Naive thymus-derived CD4-positive, alpha-beta T cell (primary cell): ENCODE measurements at regions of chr9 and their contacts with region 1.

Region 1: DNA sequence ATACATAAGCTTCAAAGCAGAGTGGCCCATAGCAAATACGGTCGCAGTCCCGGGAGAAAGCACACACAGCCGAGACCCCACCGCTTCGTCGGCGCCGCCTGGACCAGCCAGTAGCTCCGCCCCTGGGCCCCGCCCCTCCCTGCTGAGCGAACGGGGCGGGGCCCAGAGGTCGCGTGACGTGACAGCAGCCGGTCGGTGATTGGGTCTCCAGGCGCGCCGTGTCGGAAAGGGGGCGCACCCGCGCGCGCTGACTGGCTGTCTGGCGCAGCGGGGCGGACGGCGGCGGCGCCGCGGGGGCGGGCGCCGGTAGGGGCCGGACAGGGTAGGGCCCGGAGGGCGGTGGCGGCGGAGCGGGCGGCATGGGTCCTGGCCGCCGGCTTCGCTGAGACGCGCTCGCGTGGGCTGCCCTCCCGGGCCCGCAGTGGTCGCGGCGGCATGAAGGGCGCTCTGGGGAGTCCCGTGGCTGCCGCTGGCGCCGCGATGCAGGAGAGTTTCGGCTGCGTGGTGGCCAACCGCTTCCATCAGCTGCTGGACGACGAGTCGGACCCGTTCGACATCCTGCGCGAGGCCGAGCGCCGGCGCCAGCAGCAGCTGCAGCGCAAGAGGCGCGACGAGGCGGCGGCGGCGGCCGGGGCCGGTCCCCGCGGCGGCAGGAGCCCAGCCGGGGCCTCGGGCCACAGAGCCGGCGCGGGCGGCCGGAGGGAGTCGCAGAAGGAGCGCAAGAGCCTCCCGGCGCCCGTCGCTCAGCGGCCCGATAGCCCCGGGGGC is at the start of gene HABP4:
- DNase-seq: peak; percentile 90 to 97 (median 95)
- ATAC-seq: peak; percentile 98
- H3K4me3 ChIP-seq: peak within 1 kb of the TSS; percentile 77
- H3K4me3 Mint-ChIP-seq: peak within 1 kb of the TSS; percentile 88 to 99 (median 93)
- H3K27ac ChIP-seq: peak within 1 kb of the TSS; percentile 74
- H3K27ac Mint-ChIP-seq: peak within 1 kb of the TSS; percentile 74 to 98 (median 94)
- H3K4me1 ChIP-seq: peaks cover 5 to 14% of the 10 kb centered on the region in 2 donors
- H3K4me1 Mint-ChIP-seq: peaks cover 19 to 33% (median 26%) of the 10 kb centered on the region in 7 donors
- H3K27me3 ChIP-seq: no peaks in the 10 kb centered on the region
- H3K27me3 Mint-ChIP-seq: peaks cover 0 to 41% (median 6%) of the 10 kb centered on the region in 5 donors
- total RNA-seq, gene HABP4: 6.6 to 40.3 (median 23.9) TPM

Region 2: DNA sequence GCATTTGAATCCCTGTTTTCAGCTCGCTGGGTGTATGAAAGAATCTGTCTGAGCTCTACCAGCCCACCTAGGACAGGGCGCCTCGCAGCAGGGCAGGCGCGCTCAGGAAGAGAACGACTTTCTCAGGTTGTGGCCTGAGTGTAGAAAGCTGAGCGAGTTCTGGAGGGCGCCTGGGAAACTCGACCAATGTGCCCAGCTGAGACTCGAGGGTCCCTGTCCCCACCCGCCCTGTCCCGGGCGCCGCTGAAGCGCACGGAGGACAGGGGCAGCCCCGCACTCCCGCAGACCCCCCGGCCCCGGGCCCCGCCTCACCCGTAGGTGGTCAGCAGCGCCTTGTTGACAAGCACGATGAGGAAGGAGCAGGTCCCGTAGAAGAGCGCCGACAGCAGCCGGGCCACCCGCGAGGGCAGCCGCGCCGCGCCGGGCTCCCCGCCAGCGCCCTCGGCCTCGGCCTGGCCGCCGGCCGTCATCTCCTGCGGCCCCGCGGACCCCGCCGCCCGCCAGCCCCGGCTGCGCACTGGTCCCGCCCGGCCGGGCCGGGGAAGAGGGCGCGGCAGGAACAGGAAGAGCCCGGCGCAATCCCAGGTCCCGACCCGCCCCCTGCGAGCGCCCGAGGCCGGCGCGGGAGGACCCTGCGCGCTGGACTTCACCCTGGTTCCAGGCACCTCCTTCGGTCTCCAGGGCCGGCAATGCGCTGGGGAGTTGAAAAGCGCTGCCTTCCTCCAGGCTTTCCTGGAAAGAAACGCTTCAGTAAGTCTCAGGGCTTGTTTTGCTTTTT is 66.7 kb before region 1 on chr9 and contains the start of gene SLC35D2:
- CTCF ChIA-PET with region 1: no interaction called
- POLR2A ChIA-PET with region 1: interaction called, 21 read pairs
- intact Hi-C with region 1: loop called (anchors 2 kb)
- DNase-seq: peak in 5 of 9 donors; percentile 7 to 32 (median 14)
- ATAC-seq: peak; percentile 69
- H3K4me3 ChIP-seq: peak within 1 kb of the TSS; percentile 58
- H3K4me3 Mint-ChIP-seq: peak within 1 kb of the TSS; percentile 82 to 89 (median 86)
- H3K27ac ChIP-seq: peak within 1 kb of the TSS; percentile 56
- H3K27ac Mint-ChIP-seq: peak within 1 kb of the TSS; percentile 43 to 86 (median 76)
- H3K4me1 ChIP-seq: peaks cover 0 to 9% of the 10 kb centered on the region in 2 donors
- H3K4me1 Mint-ChIP-seq: peaks cover 10 to 42% (median 27%) of the 10 kb centered on the region in 7 donors
- H3K27me3 ChIP-seq: no peaks in the 10 kb centered on the region
- H3K27me3 Mint-ChIP-seq: no peaks in the 10 kb centered on the region
- total RNA-seq, gene SLC35D2: 9.7 to 20.2 (median 19.1) TPM